ENCODE measurements at regions of chr16 and their contacts with region 1.

Region 1: DNA sequence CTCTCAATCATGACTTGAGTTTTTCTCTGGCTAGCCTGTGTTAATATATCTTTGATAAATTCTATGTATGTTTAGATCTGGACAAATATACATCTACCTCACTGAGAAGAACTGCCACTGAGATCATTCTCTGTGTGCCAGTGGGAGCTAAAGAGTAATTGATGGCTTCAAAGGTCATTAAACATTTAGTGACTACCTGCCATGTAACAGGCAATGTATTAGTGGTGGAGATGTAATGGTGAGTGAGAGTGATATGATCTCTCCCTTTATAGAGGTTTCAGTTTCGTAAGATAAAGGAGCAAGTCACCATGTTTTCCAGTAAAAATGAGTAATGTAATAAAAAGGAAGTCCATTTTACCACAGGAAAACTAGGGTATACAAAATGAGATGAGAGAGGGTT is 235.8 kb upstream of the CDH8 start:
- DNase-seq: no peak
- H3K4me3 ChIP-seq: no peak overlapping the region
- H3K27ac ChIP-seq: no peak overlapping the region
- H3K4me1 ChIP-seq: no peaks in the 10 kb centered on the region
- H3K27me3 ChIP-seq: no peaks in the 10 kb centered on the region
- CTCF ChIP-seq: no peak
- POLR2A ChIP-seq: no peak

Region 2: GRCh38 chr16:62516001-62516400 is 244.0 kb after region 1 on chr16:
- intact Hi-C with region 1: loop called (anchors 5 kb)
- DNase-seq: no peak
- H3K4me3 ChIP-seq: no peak overlapping the region
- H3K27ac ChIP-seq: no peak overlapping the region
- H3K4me1 ChIP-seq: no peaks in the 10 kb centered on the region
- H3K27me3 ChIP-seq: no peaks in the 10 kb centered on the region
- CTCF ChIP-seq: no peak
- POLR2A ChIP-seq: no peak

Measured in breast epithelium (tissue), 4 donors.